ENCODE measurements at regions of chr11 and their contacts with region 1.

Region 1: GRCh38 chr11:102050927-102051575 is 3.8 kb downstream of the CFAP300 start:
- DNase-seq: no peak
- H3K4me3 ChIP-seq: no peak overlapping the region
- H3K27ac ChIP-seq: no peak overlapping the region
- H3K4me1 ChIP-seq: peaks cover 0 to 7% (median 6%) of the 10 kb centered on the region in 4 donors
- H3K27me3 ChIP-seq: no peaks in the 10 kb centered on the region
- CTCF ChIP-seq: no peak

Region 2: DNA sequence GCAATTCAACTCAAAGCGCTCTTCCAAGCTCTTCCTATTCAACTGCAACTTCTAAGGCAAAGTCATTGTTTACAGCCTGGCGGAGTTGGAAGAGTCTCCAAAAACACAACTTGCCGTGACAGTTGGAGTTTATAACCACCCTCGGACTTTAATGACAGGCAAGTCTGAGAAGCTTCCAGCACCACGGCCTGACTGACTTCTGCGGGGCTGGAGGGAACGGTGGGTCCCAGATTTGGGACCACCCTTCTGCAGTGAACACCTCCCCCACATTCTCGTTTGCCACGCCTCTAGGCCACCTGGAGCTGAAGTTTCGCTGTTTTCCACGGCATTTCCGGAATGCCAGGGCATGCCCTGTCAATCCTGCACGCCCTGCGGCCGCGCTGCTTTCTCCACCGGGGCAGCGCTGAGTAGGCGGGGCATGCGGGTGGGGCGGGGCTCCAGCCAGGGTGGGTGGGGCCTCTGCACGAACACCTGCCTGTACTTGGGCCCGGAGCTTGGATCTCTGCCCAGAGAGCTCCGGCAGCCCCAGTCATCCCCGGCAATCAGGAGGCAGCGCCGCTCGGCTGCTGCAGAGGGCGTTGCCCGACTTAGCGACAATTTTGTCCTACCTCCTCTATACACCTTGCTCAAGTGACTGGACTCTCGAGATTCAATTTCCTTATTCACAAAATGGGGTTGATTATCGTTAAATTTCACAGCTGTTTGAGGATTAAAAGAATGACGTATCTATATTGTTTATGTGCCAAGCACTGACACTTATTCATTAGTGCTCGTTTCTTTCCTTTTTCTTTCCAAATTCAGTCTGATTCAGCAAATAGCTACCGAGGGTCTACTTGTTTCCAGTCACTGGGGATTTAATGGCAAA is 217.5 kb after region 1 on chr11:
- intact Hi-C with region 1: loop called (anchors 10 kb)
- DNase-seq: peak; percentile 51 to 85
- H3K4me3 ChIP-seq: peak overlapping the region; percentile 54 to 66
- H3K27ac ChIP-seq: peak overlapping the region; percentile 16 to 33
- H3K4me1 ChIP-seq: peaks cover 0 to 9% (median 6%) of the 10 kb centered on the region in 4 donors
- H3K27me3 ChIP-seq: no peaks in the 10 kb centered on the region
- CTCF ChIP-seq: peak; percentile 17 to 55

Measured in tibial artery (tissue), 4 donors.